ENCODE measurements at regions of chr18 and their contacts with region 1.

Region 1: DNA sequence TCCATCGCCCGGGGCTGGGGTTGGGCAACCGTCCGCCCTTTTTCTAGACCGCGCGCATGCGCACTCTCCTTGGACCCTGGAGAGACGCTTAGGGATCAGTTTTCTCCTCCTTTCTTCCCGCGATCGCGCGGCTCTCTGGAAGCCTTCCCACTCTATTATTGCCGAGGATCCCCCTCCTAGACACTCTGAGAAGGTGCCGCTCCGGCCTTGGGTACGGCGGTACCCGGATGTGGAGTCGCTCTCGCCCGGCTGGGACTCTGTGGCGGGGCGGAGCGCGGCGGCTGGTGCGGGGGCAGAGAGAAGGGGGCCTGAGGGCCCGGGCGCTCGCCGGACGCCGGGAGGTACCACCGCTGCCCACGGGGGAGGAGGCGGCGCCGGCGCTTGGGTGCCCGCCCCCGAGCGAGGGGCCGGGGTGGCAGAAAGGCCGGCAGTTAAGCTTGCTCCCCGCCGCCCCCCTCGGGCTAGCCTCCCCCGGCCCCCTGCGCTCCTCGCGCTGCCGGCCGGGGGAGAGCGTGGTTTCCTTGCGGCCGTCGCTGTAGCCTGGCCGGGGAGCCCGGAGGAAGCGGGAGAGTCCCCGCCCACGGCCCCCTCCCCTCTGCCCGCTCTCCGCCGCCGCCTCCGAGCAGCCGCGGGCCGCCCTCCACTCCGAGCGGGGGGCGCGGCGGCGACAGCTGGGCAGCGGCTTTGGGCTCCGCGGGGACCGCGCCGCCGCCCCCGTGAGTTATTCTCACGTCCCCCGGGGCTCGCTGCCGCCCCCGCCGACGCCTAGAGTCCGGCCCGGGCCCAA is at the start of gene MIB1:
- DNase-seq: no peak
- H3K4me3 Mint-ChIP-seq: peak within 1 kb of the TSS; percentile 86
- H3K27ac Mint-ChIP-seq: peak within 1 kb of the TSS; percentile 88
- H3K4me1 Mint-ChIP-seq: peaks cover 27% of the 10 kb centered on the region
- H3K27me3 Mint-ChIP-seq: peaks cover 2% of the 10 kb centered on the region
- total RNA-seq, gene MIB1: 22.8 to 26.2 TPM

Region 2: GRCh38 chr18:21489119-21489750 is 251.7 kb before region 1 on chr18:
- CTCF ChIA-PET with region 1: no interaction called
- intact Hi-C with region 1: loop called (anchors 5 kb)
- DNase-seq: peak; percentile 52
- H3K4me3 Mint-ChIP-seq: no peak overlapping the region
- H3K27ac Mint-ChIP-seq: no peak overlapping the region
- H3K4me1 Mint-ChIP-seq: no peaks in the 10 kb centered on the region
- H3K27me3 Mint-ChIP-seq: peaks cover 6% of the 10 kb centered on the region

Region 3: DNA sequence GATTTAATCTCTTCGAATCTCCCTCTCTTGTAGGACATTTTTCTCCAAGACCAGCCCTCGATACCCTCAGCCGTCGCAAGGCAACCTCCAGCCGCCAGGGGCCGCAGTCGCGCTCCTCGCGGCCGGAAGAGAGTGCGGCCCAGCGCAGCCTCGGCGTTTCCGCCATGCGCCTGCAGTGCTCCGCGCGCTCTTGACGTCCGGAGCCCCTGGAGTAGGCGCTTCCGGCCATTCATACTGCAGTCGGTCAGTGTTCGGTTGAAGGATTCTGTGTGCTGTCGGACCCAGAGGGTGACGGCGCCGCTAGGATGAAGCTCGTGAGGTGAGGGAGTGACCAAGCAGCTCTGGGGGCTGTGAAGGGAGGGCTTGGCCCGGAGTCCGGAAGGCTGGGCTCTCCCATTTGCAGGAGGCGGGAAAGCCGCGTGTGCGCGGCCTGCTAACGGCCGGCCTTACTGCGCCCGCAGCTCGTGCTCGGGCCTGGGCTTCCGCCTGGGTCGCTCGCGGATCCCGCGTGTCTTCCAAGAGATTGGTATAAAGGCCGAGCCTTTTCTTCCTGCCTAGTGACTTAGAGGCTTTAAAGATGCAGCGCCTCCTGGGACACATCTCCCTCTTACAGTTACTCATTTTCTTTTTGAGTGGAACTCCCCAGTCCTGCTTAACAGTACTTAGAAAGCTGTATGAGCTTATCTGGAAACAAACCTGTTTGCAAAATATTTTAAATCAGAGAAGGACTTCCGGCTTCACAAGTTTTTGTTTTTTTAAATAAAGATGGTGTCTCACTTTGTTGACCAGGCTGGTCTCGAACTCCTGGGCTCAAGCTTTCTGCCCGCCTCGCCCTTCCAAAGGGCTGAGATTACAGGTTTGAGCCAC is 128.6 kb before region 1 on chr18 and contains the start of gene SNRPD1:
- CTCF ChIA-PET with region 1: interaction called, 4 read pairs
- intact Hi-C with region 1: loop called (anchors 1 kb)
- DNase-seq: peak; percentile 89
- H3K4me3 Mint-ChIP-seq: peak within 1 kb of the TSS; percentile 96
- H3K27ac Mint-ChIP-seq: peak within 1 kb of the TSS; percentile 97
- H3K4me1 Mint-ChIP-seq: peaks cover 35% of the 10 kb centered on the region
- H3K27me3 Mint-ChIP-seq: no peaks in the 10 kb centered on the region
- total RNA-seq, gene SNRPD1: 133 to 144 TPM

Region 4: DNA sequence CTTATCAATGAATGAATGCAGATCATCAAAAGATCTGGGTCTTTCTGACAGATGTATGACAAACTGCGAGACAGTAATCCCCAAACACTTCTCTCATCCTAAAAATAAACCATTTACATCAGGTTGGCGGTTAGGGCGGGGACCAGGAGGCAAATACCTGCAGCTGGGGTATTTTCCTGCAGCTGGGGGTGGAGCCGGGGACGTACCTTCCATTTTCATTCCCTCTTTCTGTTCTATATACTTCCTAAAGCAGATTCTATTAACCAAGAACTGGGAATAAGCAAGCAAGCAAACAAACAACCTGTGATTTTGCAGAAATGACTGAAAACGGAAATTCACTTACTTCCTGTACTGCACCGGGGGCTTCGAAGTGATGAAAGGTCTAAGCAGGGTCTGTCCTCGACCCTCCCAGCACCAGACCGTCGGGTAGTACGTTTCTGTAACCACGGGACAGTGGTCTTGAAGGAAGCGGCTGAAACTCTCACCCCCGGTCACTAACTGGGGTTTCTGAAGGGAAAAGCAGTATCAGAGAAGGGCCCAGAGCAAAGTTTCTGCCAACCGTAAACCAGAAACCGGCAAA is 37.6 kb before region 1 on chr18:
- CTCF ChIA-PET with region 1: interaction called, 5 read pairs
- intact Hi-C with region 1: loop called (anchors 1 kb)
- DNase-seq: peak; percentile 80
- H3K4me3 Mint-ChIP-seq: peak overlapping the region; percentile 91
- H3K27ac Mint-ChIP-seq: peak overlapping the region; percentile 91
- H3K4me1 Mint-ChIP-seq: peaks cover 21% of the 10 kb centered on the region
- H3K27me3 Mint-ChIP-seq: no peaks in the 10 kb centered on the region

Region 5: GRCh38 chr18:22230471-22230945 is 489.6 kb after region 1 on chr18:
- CTCF ChIA-PET with region 1: no interaction called
- intact Hi-C with region 1: no loop called
- DNase-seq: no peak
- H3K4me3 Mint-ChIP-seq: no peak overlapping the region
- H3K27ac Mint-ChIP-seq: no peak overlapping the region
- H3K4me1 Mint-ChIP-seq: no peaks in the 10 kb centered on the region
- H3K27me3 Mint-ChIP-seq: no peaks in the 10 kb centered on the region

Region 6: DNA sequence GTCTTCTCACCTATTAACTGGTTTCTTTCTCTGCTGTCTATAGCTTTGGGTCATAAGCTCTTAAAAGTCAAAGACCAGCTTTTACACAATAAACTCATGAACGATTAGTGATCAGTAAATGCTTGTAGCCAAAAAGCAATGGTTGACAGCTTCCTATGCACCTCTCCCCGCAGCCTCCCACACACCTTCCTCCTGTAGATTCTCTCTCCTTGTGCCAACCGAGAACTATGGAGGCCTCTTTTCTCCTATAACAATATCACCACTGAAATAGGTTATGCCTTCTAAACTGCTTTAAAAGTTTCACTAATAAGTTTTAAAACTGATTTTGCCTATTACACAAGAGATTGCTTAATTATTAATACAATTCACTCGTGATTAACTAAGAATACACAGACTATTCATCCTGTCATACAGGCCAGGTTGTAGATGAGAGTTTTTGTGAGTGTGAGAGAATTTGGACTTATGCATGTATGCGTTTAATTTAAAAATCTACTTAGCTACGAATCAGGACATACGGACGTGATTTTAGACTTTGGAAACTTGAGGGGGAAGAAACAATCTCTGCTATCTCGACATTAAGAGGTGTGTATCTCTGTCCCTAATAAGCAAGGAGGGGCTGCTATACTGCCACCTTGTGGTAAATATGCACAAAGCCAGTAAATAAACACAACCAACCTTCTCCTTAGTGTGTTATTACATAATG is 963.1 kb after region 1 on chr18:
- CTCF ChIA-PET with region 1: no interaction called
- intact Hi-C with region 1: loop called (anchors 10 kb)
- DNase-seq: peak; percentile 13
- H3K4me3 Mint-ChIP-seq: no peak overlapping the region
- H3K27ac Mint-ChIP-seq: no peak overlapping the region
- H3K4me1 Mint-ChIP-seq: no peaks in the 10 kb centered on the region
- H3K27me3 Mint-ChIP-seq: peaks cover 6% of the 10 kb centered on the region